Aorta (tissue), 5 donors: ENCODE measurements at regions of chrX and their contacts with region 1.

Region 1: DNA sequence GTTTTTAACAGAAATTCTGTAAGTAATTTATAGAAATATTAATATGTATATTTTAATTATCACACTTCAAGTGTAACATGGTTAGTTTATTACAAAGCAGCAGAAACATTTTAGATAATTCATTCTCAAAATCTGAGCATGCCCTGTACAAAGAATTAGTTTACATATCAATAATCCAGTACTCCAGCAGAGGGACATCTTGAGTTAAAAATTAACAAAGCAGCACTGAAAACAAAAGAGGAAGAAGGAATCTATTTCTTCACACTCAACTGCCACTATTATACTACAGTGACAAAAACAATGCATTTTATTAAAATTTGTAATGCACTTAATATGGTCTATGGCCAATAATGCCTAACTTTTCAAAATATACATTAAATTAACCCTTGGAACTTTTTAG is 179.1 kb upstream of the KLHL4 start:
- DNase-seq: no peak
- ATAC-seq: no peak
- H3K4me3 ChIP-seq: no peak overlapping the region
- H3K27ac ChIP-seq: no peak overlapping the region
- H3K4me1 ChIP-seq: no peaks in the 10 kb centered on the region
- H3K27me3 ChIP-seq: no peaks in the 10 kb centered on the region

Region 2: GRCh38 chrX:87664381-87664780 is 325.9 kb after region 1 on chrX:
- intact Hi-C with region 1: loop called (anchors 5 kb)
- DNase-seq: no peak
- ATAC-seq: no peak
- H3K4me3 ChIP-seq: no peak overlapping the region
- H3K27ac ChIP-seq: no peak overlapping the region
- H3K4me1 ChIP-seq: no peaks in the 10 kb centered on the region
- H3K27me3 ChIP-seq: no peaks in the 10 kb centered on the region